ENCODE measurements at regions of chr16 and their contacts with region 1.

Region 1: GRCh38 chr16:85821441-85822135 is 22.1 kb downstream of the COX4I1 start:
- DNase-seq: peak; percentile 75 to 91 (median 90)
- ATAC-seq: peak; percentile 85 to 87
- H3K4me3 ChIP-seq: no peak overlapping the region
- H3K27ac ChIP-seq: no peak overlapping the region
- H3K4me1 ChIP-seq: no peaks in the 10 kb centered on the region
- H3K27me3 ChIP-seq: no peaks in the 10 kb centered on the region

Region 2: DNA sequence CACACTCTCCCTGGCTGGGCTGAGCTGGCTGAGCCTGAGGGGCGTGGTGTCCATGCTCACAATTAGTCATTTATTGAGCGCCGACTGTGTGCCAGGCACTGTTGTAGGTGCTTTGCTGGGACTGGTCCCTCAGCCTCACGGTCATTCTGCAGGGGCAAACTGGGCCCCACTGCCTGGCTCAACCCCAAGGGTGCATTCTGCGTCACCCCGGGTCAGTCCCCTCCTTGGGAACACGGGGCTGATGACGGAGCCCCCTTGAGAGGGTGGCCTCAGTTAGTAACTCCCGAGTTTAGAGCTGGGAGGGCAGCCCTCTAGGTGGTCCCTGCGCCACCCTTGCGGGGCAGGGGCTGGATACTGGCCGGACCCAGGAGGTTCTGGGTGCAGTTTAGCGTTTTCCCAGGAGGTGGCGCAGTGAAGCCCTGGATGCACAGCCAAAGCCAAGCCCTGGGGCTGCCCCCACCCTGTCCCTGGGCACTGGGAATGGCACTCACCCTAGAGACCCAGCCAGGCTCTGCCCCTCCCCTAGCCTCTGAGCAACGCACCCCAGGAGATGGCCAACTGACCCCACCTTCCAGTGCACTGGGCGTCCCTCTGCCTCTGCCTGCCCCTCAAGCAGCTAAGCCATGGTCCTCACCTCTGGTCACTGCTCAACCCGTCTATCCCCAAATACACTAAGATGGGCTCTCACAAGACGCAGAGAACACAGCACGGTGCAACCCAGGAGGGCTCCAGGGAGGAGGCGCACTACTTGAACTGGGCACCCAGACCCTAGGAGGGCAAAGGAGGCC is 451.7 kb before region 1 on chr16:
- intact Hi-C with region 1: no loop called
- DNase-seq: peak; percentile 65 to 87 (median 85)
- ATAC-seq: peak; percentile 50 to 52
- H3K4me3 ChIP-seq: no peak overlapping the region
- H3K27ac ChIP-seq: peak overlapping the region; percentile 10
- H3K4me1 ChIP-seq: no peaks in the 10 kb centered on the region
- H3K27me3 ChIP-seq: no peaks in the 10 kb centered on the region

Region 3: GRCh38 chr16:85888405-85889331 is 67.1 kb after region 1 on chr16:
- intact Hi-C with region 1: no loop called
- DNase-seq: no peak
- ATAC-seq: peak in 1 of 2 donors; percentile 39
- H3K4me3 ChIP-seq: no peak overlapping the region
- H3K27ac ChIP-seq: no peak overlapping the region
- H3K4me1 ChIP-seq: no peaks in the 10 kb centered on the region
- H3K27me3 ChIP-seq: no peaks in the 10 kb centered on the region

Region 4: GRCh38 chr16:85986931-85987749 is 165.6 kb after region 1 on chr16:
- intact Hi-C with region 1: loop called in 3 of 4 experiments (anchors 2 to 5 kb)
- DNase-seq: peak in 1 of 3 donors; percentile 50
- ATAC-seq: no peak
- H3K4me3 ChIP-seq: no peak overlapping the region
- H3K27ac ChIP-seq: no peak overlapping the region
- H3K4me1 ChIP-seq: no peaks in the 10 kb centered on the region
- H3K27me3 ChIP-seq: no peaks in the 10 kb centered on the region

Region 5: GRCh38 chr16:86016201-86016871 is 194.7 kb after region 1 on chr16:
- intact Hi-C with region 1: loop called (anchors 1 to 5 kb)
- DNase-seq: no peak
- ATAC-seq: peak in 1 of 2 donors; percentile 59
- H3K4me3 ChIP-seq: no peak overlapping the region
- H3K27ac ChIP-seq: no peak overlapping the region
- H3K4me1 ChIP-seq: no peaks in the 10 kb centered on the region
- H3K27me3 ChIP-seq: no peaks in the 10 kb centered on the region

Measured in right cardiac atrium (tissue), 5 donors.